IMR-90 (cell line): ENCODE measurements at regions of chr14 and their contacts with region 1.

Region 1: GRCh38 chr14:64294672-64295413 is 672 bp upstream of the ESR2 start:
- DNase-seq: peak; percentile 53
- ATAC-seq: peak; percentile 92
- H3K4me3 ChIP-seq: peak overlapping the region; percentile 42
- H3K27ac ChIP-seq: no peak overlapping the region
- H3K4me1 ChIP-seq: 0 out of 2 replicates have a peak, but pooled peaks cover 2% of the 10 kb centered on the region
- H3K27me3 ChIP-seq: peaks cover 15% of the 10 kb centered on the region
- CTCF ChIP-seq: peak; percentile 86
- POLR2A ChIP-seq: no peak
- RAD21 ChIP-seq: peak; percentile 86

Region 2: DNA sequence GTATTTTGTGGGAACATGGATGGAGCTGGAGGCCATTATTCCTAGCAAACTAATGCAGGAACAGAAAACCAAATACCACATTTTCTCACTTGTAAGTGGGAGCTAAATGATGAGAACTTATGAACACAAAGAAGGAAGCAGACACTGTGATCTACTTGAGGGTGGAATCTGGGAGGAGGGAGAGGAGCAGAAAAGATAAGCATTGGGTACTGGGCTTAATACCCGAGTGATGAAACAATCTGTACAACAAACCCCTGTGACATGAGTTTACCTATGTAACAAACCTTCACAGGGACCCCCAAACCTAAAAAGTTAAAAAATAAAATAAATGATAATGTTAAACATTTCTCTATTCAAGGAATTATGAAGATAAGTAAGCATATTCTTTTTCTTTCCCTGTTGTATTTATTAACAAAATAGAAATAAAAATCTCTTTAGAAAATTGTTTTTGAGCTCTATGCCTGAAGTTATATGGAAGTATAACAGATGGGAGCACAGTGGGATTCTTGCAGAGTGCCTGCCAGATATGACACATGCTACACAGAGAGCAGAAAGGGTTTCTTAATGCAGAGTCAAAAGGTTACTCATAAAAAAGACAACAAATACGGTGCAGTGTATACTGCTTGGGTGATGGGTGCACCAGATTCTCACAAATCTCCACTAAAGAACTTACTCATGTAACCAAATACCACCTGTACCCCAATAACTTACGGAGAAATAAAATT is 494.0 kb before region 1 on chr14:
- CTCF ChIA-PET with region 1: interaction called, 4 read pairs
- POLR2A ChIA-PET with region 1: no interaction called
- dilution Hi-C with region 1: no loop called
- in situ Hi-C with region 1: loop called (anchors 5 kb)
- intact Hi-C with region 1: loop called (anchors 1 kb)
- DNase-seq: no peak
- ATAC-seq: no peak
- H3K4me3 ChIP-seq: no peak overlapping the region
- H3K27ac ChIP-seq: no peak overlapping the region
- H3K4me1 ChIP-seq: no peaks in the 10 kb centered on the region
- H3K27me3 ChIP-seq: peaks cover 2% of the 10 kb centered on the region
- CTCF ChIP-seq: no peak
- POLR2A ChIP-seq: no peak
- RAD21 ChIP-seq: no peak

Region 3: DNA sequence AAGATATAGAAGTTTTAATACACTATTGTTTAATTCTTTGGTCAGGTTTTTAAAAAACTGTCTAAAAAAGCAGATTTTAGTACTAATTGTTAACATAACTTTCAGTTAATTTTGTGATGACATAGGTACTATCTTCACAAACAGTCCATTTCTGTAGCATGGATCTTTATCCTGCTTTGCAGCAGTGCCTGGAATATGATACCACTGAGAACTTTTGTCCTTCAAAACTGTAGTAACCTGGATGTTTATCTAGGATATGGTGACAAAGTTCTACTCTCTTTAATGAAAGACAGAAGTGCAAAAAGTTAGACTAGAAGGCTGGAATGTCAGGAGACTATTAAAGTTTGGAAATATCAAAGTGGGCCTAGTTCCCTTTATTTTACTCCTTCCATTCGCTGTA is 282.1 kb before region 1 on chr14:
- CTCF ChIA-PET with region 1: interaction called, 4 read pairs
- POLR2A ChIA-PET with region 1: no interaction called
- dilution Hi-C with region 1: no loop called
- in situ Hi-C with region 1: no loop called
- intact Hi-C with region 1: loop called (anchors 10 kb)
- DNase-seq: no peak
- ATAC-seq: no peak
- H3K4me3 ChIP-seq: no peak overlapping the region
- H3K27ac ChIP-seq: no peak overlapping the region
- H3K4me1 ChIP-seq: no peaks in the 10 kb centered on the region
- H3K27me3 ChIP-seq: no peaks in the 10 kb centered on the region
- CTCF ChIP-seq: no peak
- POLR2A ChIP-seq: no peak
- RAD21 ChIP-seq: no peak

Region 4: GRCh38 chr14:64040044-64040443 is 254.8 kb before region 1 on chr14:
- CTCF ChIA-PET with region 1: interaction called, 4 read pairs
- POLR2A ChIA-PET with region 1: no interaction called
- dilution Hi-C with region 1: loop called (anchors 25 kb)
- in situ Hi-C with region 1: loop called (anchors 10 kb)
- intact Hi-C with region 1: loop called (anchors 1 kb)
- DNase-seq: peak; percentile 44
- ATAC-seq: no peak; the same call in 1 of the 2 replicates
- H3K4me3 ChIP-seq: no peak overlapping the region
- H3K27ac ChIP-seq: no peak overlapping the region
- H3K4me1 ChIP-seq: no peaks in the 10 kb centered on the region; the same call in none of the 2 replicates
- H3K27me3 ChIP-seq: no peaks in the 10 kb centered on the region
- CTCF ChIP-seq: peak; percentile 72
- POLR2A ChIP-seq: no peak
- RAD21 ChIP-seq: peak; percentile 80

Region 5: GRCh38 chr14:64137657-64138290 is 157.1 kb before region 1 on chr14:
- CTCF ChIA-PET with region 1: interaction called, 3 read pairs
- POLR2A ChIA-PET with region 1: no interaction called
- dilution Hi-C with region 1: no loop called
- in situ Hi-C with region 1: no loop called
- intact Hi-C with region 1: loop called (anchors 2 kb)
- DNase-seq: peak; percentile 8
- ATAC-seq: no peak
- H3K4me3 ChIP-seq: no peak overlapping the region
- H3K27ac ChIP-seq: no peak overlapping the region
- H3K4me1 ChIP-seq: no peaks in the 10 kb centered on the region
- H3K27me3 ChIP-seq: no peaks in the 10 kb centered on the region
- CTCF ChIP-seq: peak; percentile 35
- POLR2A ChIP-seq: no peak
- RAD21 ChIP-seq: 0 out of 2 replicates have a peak, but pooled peaks have one; percentile 25

Region 6: GRCh38 chr14:64196814-64197411 is 97.9 kb before region 1 on chr14:
- CTCF ChIA-PET with region 1: no interaction called
- POLR2A ChIA-PET with region 1: no interaction called
- dilution Hi-C with region 1: no loop called
- in situ Hi-C with region 1: no loop called
- intact Hi-C with region 1: loop called (anchors 10 kb)
- DNase-seq: peak; percentile 64
- ATAC-seq: peak; percentile 86
- H3K4me3 ChIP-seq: peak overlapping the region; percentile 61
- H3K27ac ChIP-seq: peak overlapping the region; percentile 44; the same call in 1 of the 2 replicates
- H3K4me1 ChIP-seq: peaks cover 10% of the 10 kb centered on the region
- H3K27me3 ChIP-seq: no peaks in the 10 kb centered on the region
- CTCF ChIP-seq: no peak
- POLR2A ChIP-seq: no peak
- RAD21 ChIP-seq: no peak; the same call in 1 of the 2 replicates

Region 7: DNA sequence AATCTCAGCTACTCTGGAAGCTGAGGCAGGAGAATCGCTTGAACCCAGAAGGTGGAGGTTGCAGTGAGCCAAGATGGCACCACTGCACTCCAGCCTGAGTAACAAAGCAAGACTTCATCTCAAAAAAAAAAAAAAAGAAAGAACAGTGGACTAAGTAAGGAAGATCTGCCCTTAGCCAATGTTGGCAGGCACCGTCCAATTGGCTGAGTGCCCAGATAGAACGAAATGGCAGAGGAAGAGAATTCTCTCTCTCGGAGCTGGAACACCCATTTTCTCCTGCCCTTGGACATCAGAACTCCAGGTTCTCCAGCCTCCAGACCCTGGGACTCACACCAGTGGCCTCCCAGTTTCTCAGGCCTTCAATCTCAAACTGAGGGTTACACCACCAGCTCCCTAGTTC is 50.6 kb before region 1 on chr14:
- CTCF ChIA-PET with region 1: no interaction called
- POLR2A ChIA-PET with region 1: no interaction called
- dilution Hi-C with region 1: no loop called
- in situ Hi-C with region 1: no loop called
- intact Hi-C with region 1: no loop called
- DNase-seq: no peak
- ATAC-seq: no peak
- H3K4me3 ChIP-seq: no peak overlapping the region
- H3K27ac ChIP-seq: no peak overlapping the region
- H3K4me1 ChIP-seq: peaks cover 3% of the 10 kb centered on the region; the same call in 1 of the 2 replicates
- H3K27me3 ChIP-seq: no peaks in the 10 kb centered on the region
- CTCF ChIP-seq: no peak
- POLR2A ChIP-seq: no peak
- RAD21 ChIP-seq: no peak

Region 8: GRCh38 chr14:64266239-64266638 is 28.6 kb before region 1 on chr14:
- CTCF ChIA-PET with region 1: no interaction called
- POLR2A ChIA-PET with region 1: no interaction called
- dilution Hi-C with region 1: no loop called
- in situ Hi-C with region 1: no loop called
- intact Hi-C with region 1: no loop called
- DNase-seq: peak; percentile 77
- ATAC-seq: peak; percentile 99
- H3K4me3 ChIP-seq: no peak overlapping the region
- H3K27ac ChIP-seq: peak overlapping the region; percentile 66; the same call in 1 of the 2 replicates
- H3K4me1 ChIP-seq: no peaks in the 10 kb centered on the region
- H3K27me3 ChIP-seq: no peaks in the 10 kb centered on the region
- CTCF ChIP-seq: no peak
- POLR2A ChIP-seq: no peak
- RAD21 ChIP-seq: no peak